Left lung (tissue), 14 donors: ENCODE measurements at regions of chr12 and their contacts with region 1.

Region 1: DNA sequence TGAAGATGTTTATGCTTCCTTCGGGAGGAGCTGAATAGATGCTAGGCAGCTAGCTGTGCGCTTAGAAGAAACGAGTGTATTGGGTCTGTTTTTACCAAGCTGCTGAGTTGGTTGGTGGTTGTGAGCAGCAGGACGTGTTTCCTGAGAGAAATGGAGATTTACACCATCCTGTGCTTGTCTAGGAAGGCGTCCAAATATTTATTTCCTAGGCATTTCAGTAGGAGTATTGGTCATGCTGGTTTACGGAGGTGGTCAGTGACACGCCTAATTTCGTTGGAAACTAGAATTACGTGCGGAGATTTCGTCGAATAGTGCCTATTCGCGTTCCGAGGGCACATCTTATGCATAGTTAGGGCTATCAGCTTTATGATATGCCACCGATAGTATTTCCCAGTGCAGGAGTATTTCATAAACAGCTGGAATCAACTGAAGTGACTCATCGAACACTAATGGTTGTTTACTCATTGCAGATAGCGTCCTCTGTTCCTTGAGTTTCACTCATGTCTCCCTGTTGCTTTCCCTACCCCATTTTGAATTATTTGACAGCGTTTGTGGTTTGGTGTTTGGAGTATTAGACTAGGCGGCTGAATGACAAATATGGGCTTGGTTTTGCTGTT is 780 bp downstream of the TBC1D15 start:
- DNase-seq: peak in 1 of 4 donors; percentile 19
- ATAC-seq: peak; percentile 27
- H3K4me3 ChIP-seq: peak overlapping the region; percentile 51 to 84
- H3K27ac ChIP-seq: peak overlapping the region; percentile 95 to 97
- H3K4me1 ChIP-seq: peaks cover 7 to 48% of the 10 kb centered on the region in 2 donors
- H3K27me3 ChIP-seq: no peaks in the 10 kb centered on the region
- CTCF ChIP-seq: no peak

Region 2: GRCh38 chr12:71746983-71747611 is 93.2 kb before region 1 on chr12:
- intact Hi-C with region 1: no loop called
- DNase-seq: peak in 2 of 4 donors; percentile 51 to 71
- ATAC-seq: peak; percentile 98
- H3K4me3 ChIP-seq: no peak overlapping the region
- H3K27ac ChIP-seq: no peak overlapping the region
- H3K4me1 ChIP-seq: peaks cover 0 to 3% of the 10 kb centered on the region in 2 donors
- H3K27me3 ChIP-seq: peaks cover 0 to 8% of the 10 kb centered on the region in 2 donors
- CTCF ChIP-seq: peak; percentile 59 to 67

Region 3: DNA sequence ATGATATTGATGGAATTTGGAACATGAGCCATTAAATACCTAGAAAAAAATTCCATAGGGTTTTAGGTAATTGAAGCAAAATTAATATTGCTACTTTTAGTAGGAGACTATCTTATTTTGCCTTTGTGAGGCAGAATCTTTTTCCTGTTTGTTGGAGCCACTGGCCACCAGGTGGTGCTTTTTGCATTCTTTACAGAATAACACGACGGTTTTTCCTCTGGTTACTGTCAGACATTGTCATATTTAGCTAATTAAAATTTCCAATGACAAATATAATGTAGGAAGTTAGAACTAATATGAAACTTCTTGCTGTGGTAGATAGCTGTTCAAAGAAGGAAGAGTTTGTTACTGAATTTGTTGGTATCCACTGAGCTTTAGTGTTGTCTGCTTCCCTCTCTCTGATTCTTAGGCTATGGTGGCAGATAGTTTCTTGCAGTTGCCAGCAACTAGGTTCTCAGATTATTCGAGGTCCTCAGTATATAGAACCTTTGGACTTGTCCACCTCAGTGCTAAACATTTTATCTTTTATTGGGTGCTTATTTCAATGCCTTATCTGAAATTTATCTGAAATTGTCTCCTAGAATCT is 60.0 kb before region 1 on chr12:
- intact Hi-C with region 1: loop called in 1 of 2 experiments (anchors 10 kb)
- DNase-seq: peak in 2 of 4 donors; percentile 10 to 27
- ATAC-seq: peak; percentile 72
- H3K4me3 ChIP-seq: no peak overlapping the region
- H3K27ac ChIP-seq: no peak overlapping the region
- H3K4me1 ChIP-seq: peaks cover 0 to 13% of the 10 kb centered on the region in 2 donors
- H3K27me3 ChIP-seq: no peaks in the 10 kb centered on the region
- CTCF ChIP-seq: peak; percentile 45 to 68

Region 4: GRCh38 chr12:71799106-71799505 is 41.2 kb before region 1 on chr12:
- intact Hi-C with region 1: no loop called
- DNase-seq: no peak
- ATAC-seq: no peak
- H3K4me3 ChIP-seq: no peak overlapping the region
- H3K27ac ChIP-seq: no peak overlapping the region
- H3K4me1 ChIP-seq: peaks cover 0 to 7% of the 10 kb centered on the region in 2 donors
- H3K27me3 ChIP-seq: no peaks in the 10 kb centered on the region
- CTCF ChIP-seq: no peak